A673 (cell line): ENCODE measurements at regions of chr15 and their contacts with region 1.

Region 1: DNA sequence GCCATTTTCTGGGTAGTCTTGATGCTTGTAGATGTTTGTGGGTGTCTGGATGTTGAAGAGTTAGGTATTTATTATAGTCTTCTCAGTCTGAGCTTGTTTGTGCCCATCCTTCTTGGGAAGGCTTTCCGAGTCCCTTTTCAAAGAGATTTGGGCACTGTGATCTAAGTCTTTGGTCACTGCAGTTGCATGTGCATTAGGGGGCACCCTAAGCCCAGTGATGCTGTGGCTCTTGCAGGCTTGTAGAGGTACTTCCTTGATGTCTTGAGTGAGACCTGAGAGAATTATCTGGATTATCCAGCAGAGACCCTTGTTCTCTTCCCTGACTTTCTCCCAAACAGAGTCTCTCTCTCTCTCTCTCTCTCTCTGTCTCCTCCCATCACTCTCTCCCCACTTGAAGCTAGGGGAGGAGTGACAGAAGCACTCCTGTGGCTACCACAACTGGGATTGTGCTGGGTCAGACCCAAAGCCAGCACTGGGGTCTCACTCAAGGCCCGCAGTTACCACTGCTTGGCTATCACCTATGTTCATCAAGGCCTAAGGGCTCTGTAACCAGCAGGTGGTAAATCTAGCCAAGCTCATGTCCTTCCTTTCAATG is 68.5 kb downstream of the TMCO5A start:
- DNase-seq: peak; percentile 80
- H3K4me3 ChIP-seq: no peak overlapping the region
- H3K27ac ChIP-seq: no peak overlapping the region
- H3K4me1 ChIP-seq: no peaks in the 10 kb centered on the region
- H3K27me3 ChIP-seq: no peaks in the 10 kb centered on the region
- CTCF ChIP-seq: peak; percentile 68

Region 2: DNA sequence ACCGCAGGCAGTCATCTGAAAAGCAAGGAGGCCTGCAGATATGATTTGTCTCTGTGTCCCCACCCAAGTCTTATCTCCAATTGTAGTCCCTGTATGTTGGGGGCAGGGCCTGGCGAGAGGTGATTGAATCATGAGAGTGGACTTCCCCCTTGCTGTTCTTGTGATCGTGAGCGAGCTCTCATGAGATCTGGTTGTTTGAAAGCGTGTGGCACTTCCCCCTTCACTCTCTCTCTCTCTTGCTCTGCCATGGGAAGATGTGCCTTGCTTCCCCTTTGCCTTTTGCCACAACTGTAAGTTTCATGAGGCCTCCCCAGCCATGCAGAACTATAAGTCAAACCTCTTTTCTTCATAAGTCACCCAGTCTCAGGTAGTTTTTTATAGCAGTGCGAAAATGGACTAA is 14.7 kb after region 1 on chr15:
- CTCF ChIA-PET with region 1: no interaction called
- POLR2A ChIA-PET with region 1: no interaction called
- intact Hi-C with region 1: no loop called
- DNase-seq: no peak
- H3K4me3 ChIP-seq: no peak overlapping the region
- H3K27ac ChIP-seq: no peak overlapping the region
- H3K4me1 ChIP-seq: no peaks in the 10 kb centered on the region
- H3K27me3 ChIP-seq: no peaks in the 10 kb centered on the region
- CTCF ChIP-seq: no peak

Region 3: DNA sequence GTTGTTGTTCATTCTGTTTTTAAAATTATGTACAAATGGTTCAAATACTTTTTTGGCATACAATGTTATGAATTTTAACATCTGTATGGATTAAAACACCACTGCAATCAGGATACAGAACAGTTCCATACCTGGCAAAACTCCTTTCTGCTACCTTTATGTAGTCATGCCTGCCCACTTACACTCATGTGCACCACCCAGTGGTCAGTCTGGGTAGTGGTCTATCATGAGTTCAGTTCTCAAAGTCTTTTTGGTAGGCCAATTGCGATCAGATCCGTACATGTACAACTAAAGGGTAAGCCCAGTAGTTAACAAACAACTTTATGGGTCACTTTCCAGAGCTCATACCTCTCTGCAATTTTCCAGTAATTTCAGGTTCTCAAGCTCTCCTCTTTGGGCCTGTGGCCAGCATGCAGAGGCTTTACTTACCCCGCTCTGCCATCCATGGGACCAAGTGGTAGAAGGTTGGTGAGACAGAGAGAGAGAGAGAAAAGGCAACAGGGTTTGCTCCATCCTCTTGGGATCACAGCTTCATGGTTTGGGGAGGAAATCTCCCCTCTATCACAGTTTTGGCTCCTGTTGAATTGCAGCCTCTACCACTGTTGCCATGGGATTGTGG is 387.1 kb after region 1 on chr15:
- CTCF ChIA-PET with region 1: interaction called, 8 read pairs
- POLR2A ChIA-PET with region 1: no interaction called
- intact Hi-C with region 1: loop called (anchors 2 kb)
- DNase-seq: peak; percentile 62
- H3K4me3 ChIP-seq: no peak overlapping the region
- H3K27ac ChIP-seq: no peak overlapping the region
- H3K4me1 ChIP-seq: no peaks in the 10 kb centered on the region
- H3K27me3 ChIP-seq: peaks cover 27% of the 10 kb centered on the region
- CTCF ChIP-seq: peak; percentile 89

Region 4: DNA sequence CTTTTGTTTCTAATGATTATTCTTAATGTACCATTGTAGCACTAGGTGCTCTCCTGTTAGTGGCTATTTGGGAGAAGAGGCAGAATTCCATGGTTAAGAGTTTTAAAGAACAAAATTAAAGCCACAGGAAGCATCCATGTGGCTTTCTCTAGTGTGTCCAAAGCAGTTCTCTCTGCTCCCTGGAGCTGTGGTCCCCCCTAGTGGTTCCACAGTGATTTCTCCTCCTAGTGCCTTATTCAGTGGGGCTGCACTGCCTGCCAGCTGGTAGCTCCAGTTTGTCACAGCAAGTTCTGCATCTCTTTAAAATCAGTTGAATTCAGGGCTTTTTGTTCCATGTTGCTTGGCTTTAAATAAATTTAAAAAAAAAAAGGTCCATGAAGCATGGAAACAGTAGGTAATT is 411.4 kb after region 1 on chr15:
- CTCF ChIA-PET with region 1: no interaction called
- POLR2A ChIA-PET with region 1: no interaction called
- intact Hi-C with region 1: loop called (anchors 5 kb)
- DNase-seq: peak; percentile 67
- H3K4me3 ChIP-seq: no peak overlapping the region
- H3K27ac ChIP-seq: no peak overlapping the region
- H3K4me1 ChIP-seq: no peaks in the 10 kb centered on the region
- H3K27me3 ChIP-seq: peaks cover 12% of the 10 kb centered on the region
- CTCF ChIP-seq: peak; percentile 68